Activated CD4-positive, alpha-beta memory T cell treated with anti-CD3 and anti-CD28 coated beads for 36 hours (primary cell): ENCODE measurements at regions of chr1 and their contacts with region 1.

Region 1: DNA sequence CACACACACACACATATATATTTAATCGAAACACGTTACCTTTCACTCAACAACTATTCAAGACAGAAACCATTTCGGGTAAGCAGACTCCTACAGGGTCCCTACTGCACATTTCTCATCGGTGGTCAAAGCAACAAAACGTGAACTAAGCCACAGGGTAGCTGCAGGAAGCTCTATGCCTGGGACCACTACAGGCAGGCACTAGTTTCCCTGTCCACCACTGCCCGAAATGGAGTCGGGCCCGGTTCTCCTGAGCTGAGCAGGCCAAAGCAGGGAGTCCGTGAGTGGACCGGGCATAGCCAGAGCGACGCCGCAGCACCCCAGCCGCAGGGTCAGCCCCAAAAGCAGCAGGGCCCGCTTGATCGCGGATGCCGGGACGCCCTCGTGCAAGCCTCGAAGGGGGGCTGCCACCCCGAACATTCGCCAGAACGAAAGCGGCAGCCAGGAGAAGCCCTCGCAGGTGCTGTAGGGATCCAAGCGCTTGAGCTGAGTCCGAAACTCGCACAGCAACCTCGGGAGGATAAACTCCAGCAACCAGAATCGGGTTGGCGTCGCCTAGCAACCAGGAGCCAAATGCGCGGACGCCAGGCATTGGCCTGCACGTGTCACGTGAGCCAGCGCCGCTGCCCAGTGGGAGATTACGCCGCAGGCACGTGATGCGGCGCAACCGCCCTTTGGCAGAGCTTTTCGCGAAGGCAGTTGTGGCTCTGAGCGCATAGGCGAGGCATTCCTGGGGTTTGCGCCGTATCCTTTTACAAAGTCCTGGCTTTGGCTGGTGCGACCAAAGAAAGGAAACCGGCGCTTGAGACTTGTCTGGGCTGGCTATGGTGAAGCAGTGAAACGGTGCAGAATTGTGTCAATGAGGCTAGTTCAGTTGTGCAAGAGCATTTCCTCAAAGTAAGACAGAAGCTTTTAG is 13.9 kb upstream of the DDI2 start:
- DNase-seq: peak; percentile 95
- H3K4me3 Mint-ChIP-seq: peak overlapping the region; percentile 73
- H3K27ac Mint-ChIP-seq: no peak overlapping the region
- H3K4me1 Mint-ChIP-seq: peaks cover 11% of the 10 kb centered on the region
- H3K27me3 Mint-ChIP-seq: no peaks in the 10 kb centered on the region

Region 2: DNA sequence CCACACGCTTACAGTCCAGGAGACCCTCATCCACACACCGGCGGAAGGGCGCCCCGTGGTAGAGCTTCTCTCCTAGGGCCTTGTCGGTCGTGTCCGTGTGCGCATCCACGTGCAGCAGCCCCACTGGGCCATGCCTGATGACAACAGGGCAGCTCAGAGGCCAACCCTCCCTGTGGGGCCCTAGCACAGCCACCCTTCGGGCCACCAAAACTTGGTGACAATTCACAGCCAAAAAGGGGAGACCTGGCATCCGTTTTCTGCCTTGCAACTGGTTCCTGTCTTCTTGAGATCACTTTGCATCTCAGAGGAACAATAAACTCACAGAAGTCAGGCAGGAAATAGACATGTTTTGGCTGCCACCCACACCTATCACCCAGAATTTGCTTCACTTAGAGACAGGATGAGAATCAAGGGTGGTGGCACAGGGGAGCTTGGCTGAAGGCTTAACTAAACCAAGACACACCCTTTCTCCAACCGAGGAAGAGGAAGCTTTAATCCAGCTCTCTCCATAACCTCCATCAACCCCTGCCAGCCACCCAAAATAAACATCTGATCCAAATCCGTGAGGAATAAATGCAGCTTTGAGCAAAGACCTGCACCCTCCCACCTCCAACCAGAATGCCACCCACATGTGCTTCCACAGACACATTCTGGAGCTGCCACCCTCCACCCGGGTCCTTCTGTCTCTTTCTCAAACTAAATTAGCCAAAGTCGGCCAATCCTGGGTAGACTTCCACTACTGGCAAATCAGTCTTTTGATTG is 24.2 kb before region 1 on chr1:
- CTCF ChIA-PET with region 1: no interaction called
- POLR2A ChIA-PET with region 1: interaction called, 3 read pairs
- intact Hi-C with region 1: loop called (anchors 1 kb)
- DNase-seq: peak; percentile 64
- H3K4me3 Mint-ChIP-seq: peak overlapping the region; percentile 48
- H3K27ac Mint-ChIP-seq: peak overlapping the region; percentile 97
- H3K4me1 Mint-ChIP-seq: peaks cover 44% of the 10 kb centered on the region
- H3K27me3 Mint-ChIP-seq: no peaks in the 10 kb centered on the region

Region 3: DNA sequence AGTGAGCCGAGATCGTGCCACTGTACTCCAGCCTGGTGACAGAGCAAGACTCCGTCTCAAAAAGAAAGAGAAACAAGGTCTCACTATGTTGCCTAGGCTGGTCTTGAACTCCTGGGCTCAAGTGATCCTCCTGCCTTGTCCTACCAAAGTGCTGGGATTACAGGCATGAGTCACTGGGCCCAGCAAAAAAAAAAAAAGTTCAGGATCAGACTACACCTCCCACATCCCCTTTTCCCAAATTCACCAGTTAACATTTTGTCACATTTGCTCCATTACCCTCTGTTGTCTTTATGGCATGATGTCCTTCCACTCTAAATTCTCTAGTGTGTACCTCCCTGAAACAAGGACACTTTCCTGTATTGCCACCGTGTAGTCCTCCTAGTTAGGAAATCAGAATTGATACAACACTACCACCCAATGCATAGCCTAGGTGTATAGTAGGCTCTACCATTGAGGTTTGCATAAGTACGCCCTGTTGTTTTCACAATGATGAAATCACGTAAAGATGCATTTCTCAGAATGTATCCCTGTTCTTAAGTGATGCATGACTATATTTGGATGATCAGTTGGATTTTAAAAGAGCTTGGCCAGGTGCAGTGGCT is 254.9 kb after region 1 on chr1:
- CTCF ChIA-PET with region 1: no interaction called
- POLR2A ChIA-PET with region 1: no interaction called
- intact Hi-C with region 1: no loop called
- DNase-seq: no peak
- H3K4me3 Mint-ChIP-seq: no peak overlapping the region
- H3K27ac Mint-ChIP-seq: peak overlapping the region; percentile 2
- H3K4me1 Mint-ChIP-seq: peaks cover 26% of the 10 kb centered on the region
- H3K27me3 Mint-ChIP-seq: no peaks in the 10 kb centered on the region